CD8-positive, alpha-beta T cell (primary cell): ENCODE measurements at regions of chr17 and their contacts with region 1.

Region 1: GRCh38 chr17:47882247-47882646 is 13.8 kb upstream of the SP2 start:
- DNase-seq: no peak
- ATAC-seq: no peak
- H3K4me3 ChIP-seq: no peak overlapping the region
- H3K4me3 Mint-ChIP-seq: no peak overlapping the region
- H3K27ac ChIP-seq: no peak overlapping the region
- H3K27ac Mint-ChIP-seq: no peak overlapping the region
- H3K4me1 ChIP-seq: peaks cover 34% of the 10 kb centered on the region
- H3K4me1 Mint-ChIP-seq: peaks cover 36% of the 10 kb centered on the region
- H3K27me3 ChIP-seq: peaks cover 0 to 2% of the 10 kb centered on the region in 2 experiments
- H3K27me3 Mint-ChIP-seq: peaks cover 12% of the 10 kb centered on the region
- CTCF ChIP-seq: no peak

Region 2: GRCh38 chr17:47855737-47856136 is 26.5 kb before region 1 on chr17:
- CTCF ChIA-PET with region 1: interaction called, 583 read pairs
- POLR2A ChIA-PET with region 1: interaction called, 3 read pairs
- intact Hi-C with region 1: loop called in 1 of 2 experiments (anchors 2 kb)
- DNase-seq: no peak
- ATAC-seq: no peak
- H3K4me3 ChIP-seq: no peak overlapping the region
- H3K4me3 Mint-ChIP-seq: no peak overlapping the region
- H3K27ac ChIP-seq: no peak overlapping the region
- H3K27ac Mint-ChIP-seq: no peak overlapping the region
- H3K4me1 ChIP-seq: peaks cover 21% of the 10 kb centered on the region
- H3K4me1 Mint-ChIP-seq: peaks cover 9% of the 10 kb centered on the region
- H3K27me3 ChIP-seq: peaks cover 16 to 23% of the 10 kb centered on the region in 2 experiments
- H3K27me3 Mint-ChIP-seq: peaks cover 61% of the 10 kb centered on the region
- CTCF ChIP-seq: no peak

Region 3: DNA sequence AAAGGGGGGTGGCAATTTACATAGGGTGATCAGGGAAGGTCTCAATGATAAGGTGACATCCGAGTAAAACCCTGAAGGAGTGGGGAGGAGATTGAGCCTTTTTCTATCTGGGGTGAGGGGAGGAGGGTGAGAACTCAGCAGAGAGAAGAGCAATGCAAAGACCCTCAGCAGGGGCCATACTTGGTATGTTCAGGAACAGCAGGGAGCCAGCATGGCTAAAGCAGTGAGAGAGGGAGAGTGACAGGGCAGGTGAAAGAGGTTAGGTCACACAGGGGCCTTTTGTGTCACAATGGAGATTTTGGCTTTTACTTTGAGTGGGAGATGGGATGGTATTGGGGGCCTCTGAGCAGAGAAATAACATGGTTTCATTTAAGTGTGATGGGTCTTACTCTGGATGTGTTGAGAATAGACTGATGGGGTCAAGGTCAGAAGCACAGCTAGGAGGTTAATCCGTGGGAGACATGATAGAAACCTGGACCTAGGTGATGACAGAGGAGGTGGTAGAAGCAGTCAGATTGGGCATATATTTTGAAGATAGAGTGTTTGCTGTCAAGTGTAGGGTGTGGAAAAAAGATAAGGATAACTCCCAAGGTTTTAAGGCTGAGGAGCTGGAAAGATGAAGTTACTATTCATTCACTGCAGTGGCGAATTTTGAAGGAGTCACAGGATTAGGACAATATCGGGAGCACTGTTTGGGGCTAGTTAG is 19.9 kb after region 1 on chr17:
- CTCF ChIA-PET with region 1: no interaction called
- POLR2A ChIA-PET with region 1: no interaction called
- intact Hi-C with region 1: no loop called
- DNase-seq: no peak
- ATAC-seq: no peak
- H3K4me3 ChIP-seq: no peak overlapping the region
- H3K4me3 Mint-ChIP-seq: no peak overlapping the region
- H3K27ac ChIP-seq: no peak overlapping the region
- H3K27ac Mint-ChIP-seq: peak overlapping the region; percentile 46
- H3K4me1 ChIP-seq: peaks cover 17% of the 10 kb centered on the region
- H3K4me1 Mint-ChIP-seq: peaks cover 68% of the 10 kb centered on the region
- H3K27me3 ChIP-seq: no peaks in the 10 kb centered on the region
- H3K27me3 Mint-ChIP-seq: no peaks in the 10 kb centered on the region
- CTCF ChIP-seq: no peak